ENCODE measurements at regions of chr1 and their contacts with region 1.

Region 1: GRCh38 chr1:119885903-119886783 is 10.2 kb downstream of the ADAM30 start:
- DNase-seq: peak; percentile 73
- ATAC-seq: peak; percentile 79
- H3K4me3 Mint-ChIP-seq: no peak overlapping the region
- H3K27ac Mint-ChIP-seq: no peak overlapping the region
- H3K4me1 Mint-ChIP-seq: peaks cover 4% of the 10 kb centered on the region
- H3K27me3 Mint-ChIP-seq: peaks cover 20% of the 10 kb centered on the region

Region 2: DNA sequence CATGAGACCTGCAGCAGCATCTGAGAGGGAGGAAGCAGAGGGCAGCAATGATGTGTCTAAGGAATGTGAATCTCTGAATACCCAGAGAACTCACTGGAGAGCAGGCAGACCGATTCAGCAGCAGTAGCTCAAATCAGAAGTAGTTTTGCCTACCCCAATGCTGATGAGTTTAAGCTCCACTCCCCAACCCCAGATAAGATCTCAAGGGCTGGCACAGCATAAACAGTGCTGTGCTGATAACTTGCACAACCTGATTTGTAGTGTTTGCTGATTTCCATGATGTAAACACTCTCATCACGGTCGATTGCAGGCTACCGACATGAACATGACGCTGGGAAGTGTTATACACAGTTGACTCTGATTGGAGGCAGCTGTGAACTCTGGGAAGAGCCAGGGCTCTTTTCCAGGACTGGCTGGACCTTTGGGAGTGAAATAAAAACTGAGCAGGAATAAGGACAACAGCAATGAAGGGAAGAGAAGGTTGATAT is 106.2 kb before region 1 on chr1:
- CTCF ChIA-PET with region 1: no interaction called
- POLR2A ChIA-PET with region 1: no interaction called
- DNase-seq: no peak
- ATAC-seq: no peak
- H3K4me3 Mint-ChIP-seq: no peak overlapping the region
- H3K27ac Mint-ChIP-seq: no peak overlapping the region
- H3K4me1 Mint-ChIP-seq: peaks cover 7% of the 10 kb centered on the region
- H3K27me3 Mint-ChIP-seq: peaks cover 47% of the 10 kb centered on the region

Region 3: GRCh38 chr1:119865627-119866026 is 20.5 kb before region 1 on chr1:
- CTCF ChIA-PET with region 1: interaction called, 22 read pairs
- POLR2A ChIA-PET with region 1: no interaction called
- DNase-seq: no peak
- ATAC-seq: no peak
- H3K4me3 Mint-ChIP-seq: no peak overlapping the region
- H3K27ac Mint-ChIP-seq: no peak overlapping the region
- H3K4me1 Mint-ChIP-seq: peaks cover 5% of the 10 kb centered on the region
- H3K27me3 Mint-ChIP-seq: peaks cover 42% of the 10 kb centered on the region

Region 4: GRCh38 chr1:119870917-119871596 is 15.1 kb before region 1 on chr1:
- CTCF ChIA-PET with region 1: interaction called, 22 read pairs
- POLR2A ChIA-PET with region 1: no interaction called
- DNase-seq: peak; percentile 86
- ATAC-seq: peak; percentile 78
- H3K4me3 Mint-ChIP-seq: no peak overlapping the region
- H3K27ac Mint-ChIP-seq: no peak overlapping the region
- H3K4me1 Mint-ChIP-seq: peaks cover 18% of the 10 kb centered on the region
- H3K27me3 Mint-ChIP-seq: peaks cover 49% of the 10 kb centered on the region

Region 5: GRCh38 chr1:119895986-119896702 is 10.0 kb after region 1 on chr1 and contains the start of gene ADAM30:
- CTCF ChIA-PET with region 1: interaction called, 13 read pairs
- POLR2A ChIA-PET with region 1: no interaction called
- DNase-seq: no peak
- ATAC-seq: no peak
- H3K4me3 Mint-ChIP-seq: no peak within 1 kb of the TSS
- H3K27ac Mint-ChIP-seq: no peak within 1 kb of the TSS
- H3K4me1 Mint-ChIP-seq: peaks cover 39% of the 10 kb centered on the region
- H3K27me3 Mint-ChIP-seq: peaks cover 19% of the 10 kb centered on the region
- total RNA-seq, gene ADAM30: not detected

Region 6: DNA sequence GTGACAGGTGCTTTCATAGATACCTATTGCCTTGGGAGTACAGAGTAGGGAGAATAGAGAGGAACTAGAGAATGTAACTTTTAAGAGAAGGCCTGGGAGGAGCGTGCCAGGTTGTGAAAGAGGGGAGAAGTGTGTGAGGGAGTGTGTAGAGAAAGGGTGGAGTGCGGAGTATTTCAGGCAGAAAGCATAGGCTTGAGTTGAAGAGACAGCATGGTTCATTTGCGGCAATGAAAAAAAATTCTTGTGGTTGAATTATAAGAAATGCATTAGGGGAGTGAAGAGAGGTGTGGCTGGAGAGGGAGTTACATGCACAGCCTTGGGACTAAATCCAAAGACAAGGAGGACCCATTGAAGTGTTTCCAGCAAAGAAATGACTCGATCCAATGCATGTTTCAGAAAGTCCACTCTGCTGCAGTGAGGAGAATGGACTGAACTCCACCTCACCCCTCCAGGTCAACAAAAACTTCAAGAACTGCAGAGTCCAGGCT is 91.9 kb after region 1 on chr1:
- CTCF ChIA-PET with region 1: no interaction called
- POLR2A ChIA-PET with region 1: no interaction called
- DNase-seq: no peak
- ATAC-seq: no peak
- H3K4me3 Mint-ChIP-seq: no peak overlapping the region
- H3K27ac Mint-ChIP-seq: no peak overlapping the region
- H3K4me1 Mint-ChIP-seq: peaks cover 15% of the 10 kb centered on the region
- H3K27me3 Mint-ChIP-seq: no peaks in the 10 kb centered on the region